Caco-2 (cell line): ENCODE measurements at regions of chr4 and their contacts with region 1.

Region 1: GRCh38 chr4:143389579-143390195 is 53.0 kb downstream of the GAB1 start:
- DNase-seq: no peak
- H3K4me3 ChIP-seq: no peak overlapping the region
- H3K4me3 Mint-ChIP-seq: peak overlapping the region; percentile 14
- H3K27ac Mint-ChIP-seq: no peak overlapping the region
- H3K4me1 ChIP-seq: peaks cover 58% of the 10 kb centered on the region
- H3K4me1 Mint-ChIP-seq: peaks cover 50% of the 10 kb centered on the region
- H3K27me3 ChIP-seq: no peaks in the 10 kb centered on the region
- H3K27me3 Mint-ChIP-seq: no peaks in the 10 kb centered on the region
- CTCF ChIP-seq: no peak

Region 2: GRCh38 chr4:143207557-143207956 is 182.1 kb before region 1 on chr4:
- CTCF ChIA-PET with region 1: no interaction called
- POLR2A ChIA-PET with region 1: no interaction called
- intact Hi-C with region 1: loop called (anchors 5 kb)
- DNase-seq: peak in 1 of 2 experiments; percentile 28
- H3K4me3 ChIP-seq: no peak overlapping the region
- H3K4me3 Mint-ChIP-seq: no peak overlapping the region
- H3K27ac Mint-ChIP-seq: no peak overlapping the region
- H3K4me1 ChIP-seq: no peaks in the 10 kb centered on the region
- H3K4me1 Mint-ChIP-seq: no peaks in the 10 kb centered on the region
- H3K27me3 ChIP-seq: no peaks in the 10 kb centered on the region
- H3K27me3 Mint-ChIP-seq: no peaks in the 10 kb centered on the region
- CTCF ChIP-seq: peak; percentile 35 to 45